Activated naive CD4-positive, alpha-beta T cell treated with anti-CD3 and anti-CD28 coated beads for 36 hours (primary cell): ENCODE measurements at regions of chr11 and their contacts with region 1.

Region 1: DNA sequence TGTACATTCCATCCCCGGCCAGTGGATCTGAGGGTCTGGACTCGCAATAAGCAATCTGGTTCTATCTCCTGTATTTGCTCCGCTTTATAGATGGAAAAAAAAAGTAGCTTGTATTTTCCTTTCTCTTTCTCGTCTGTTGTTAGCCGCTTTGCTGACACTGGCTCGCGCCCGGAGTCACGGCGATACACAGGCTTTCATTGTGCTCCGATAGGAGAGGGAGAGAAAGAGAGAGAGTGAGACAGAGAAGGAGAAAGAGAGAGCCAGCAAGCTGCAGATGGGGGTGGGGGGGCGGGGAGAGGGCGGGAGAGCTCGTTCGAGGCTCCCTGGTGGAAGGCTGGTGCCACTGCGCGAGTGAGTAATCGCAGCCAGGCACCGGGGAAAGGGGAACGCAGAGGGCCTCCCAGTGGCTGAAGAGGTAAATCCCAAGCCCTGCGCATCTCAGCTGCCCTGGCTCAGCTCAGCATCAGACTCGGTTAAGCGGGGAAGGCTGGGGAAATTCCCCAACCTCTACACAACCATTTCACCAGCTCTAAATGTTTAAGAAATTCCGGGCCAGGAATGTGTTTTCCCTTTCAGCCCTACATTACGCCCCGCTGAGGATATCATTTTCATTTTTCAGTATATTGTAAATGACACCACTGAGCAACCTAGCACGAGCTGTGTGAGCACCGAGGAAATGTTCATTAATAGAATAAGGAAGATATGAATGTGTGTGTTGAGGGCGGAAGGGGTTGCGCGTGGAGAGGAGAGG is at the start of gene MAML2:
- DNase-seq: peak; percentile 97
- H3K4me3 Mint-ChIP-seq: peak within 1 kb of the TSS; percentile 98
- H3K27ac Mint-ChIP-seq: peak within 1 kb of the TSS; percentile 94
- H3K4me1 Mint-ChIP-seq: peaks cover 22% of the 10 kb centered on the region
- H3K27me3 Mint-ChIP-seq: no peaks in the 10 kb centered on the region
- total RNA-seq, gene MAML2: 26.6 to 28.1 TPM

Region 2: DNA sequence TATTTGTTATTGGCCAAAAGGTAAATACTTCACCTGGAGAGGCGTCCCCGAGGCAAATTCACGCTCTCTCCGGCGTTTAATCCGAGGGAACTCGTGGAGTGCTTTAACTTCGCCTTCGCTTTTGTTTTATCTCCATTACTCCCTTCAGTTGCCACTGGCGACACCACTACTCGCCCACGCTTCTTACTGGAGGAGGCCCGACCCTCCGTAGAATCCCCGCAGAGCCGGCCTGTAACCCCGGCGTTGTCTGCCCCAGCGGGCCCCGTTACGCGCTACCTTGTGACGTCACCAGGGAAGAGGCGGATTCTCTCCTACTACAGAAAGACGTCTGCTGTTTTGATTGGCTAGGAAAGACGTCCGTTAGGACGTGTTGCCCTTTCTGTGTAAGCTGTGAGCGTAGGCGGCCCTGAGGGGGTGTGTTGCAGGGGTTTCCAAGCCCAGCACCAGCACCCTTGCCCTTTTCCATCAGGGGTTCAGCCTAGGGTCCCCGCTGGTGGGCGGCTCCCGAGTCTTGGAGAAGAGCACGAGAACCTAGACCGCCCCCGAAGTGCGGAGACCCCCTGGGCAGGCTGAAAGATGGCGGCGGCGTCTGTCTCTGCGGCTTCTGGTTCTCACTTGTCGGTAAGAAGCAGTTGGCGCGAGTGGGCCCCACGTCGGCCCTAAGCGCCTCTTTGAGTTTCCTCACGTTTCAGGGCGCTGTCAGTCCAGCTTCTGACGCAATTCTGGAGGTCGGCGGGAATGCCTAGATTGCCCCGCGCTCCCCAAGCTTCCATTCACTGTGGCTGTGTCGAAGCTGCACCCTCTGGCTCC is 552.8 kb before region 1 on chr11 and contains the start of gene CEP57:
- CTCF ChIA-PET with region 1: interaction called, 3 read pairs
- intact Hi-C with region 1: loop called (anchors 1 kb)
- DNase-seq: peak; percentile 98
- H3K4me3 Mint-ChIP-seq: peak within 1 kb of the TSS; percentile 99
- H3K27ac Mint-ChIP-seq: peak within 1 kb of the TSS; percentile 100
- H3K4me1 Mint-ChIP-seq: peaks cover 56% of the 10 kb centered on the region
- H3K27me3 Mint-ChIP-seq: no peaks in the 10 kb centered on the region
- total RNA-seq, gene CEP57: 110 to 115 TPM

Region 3: DNA sequence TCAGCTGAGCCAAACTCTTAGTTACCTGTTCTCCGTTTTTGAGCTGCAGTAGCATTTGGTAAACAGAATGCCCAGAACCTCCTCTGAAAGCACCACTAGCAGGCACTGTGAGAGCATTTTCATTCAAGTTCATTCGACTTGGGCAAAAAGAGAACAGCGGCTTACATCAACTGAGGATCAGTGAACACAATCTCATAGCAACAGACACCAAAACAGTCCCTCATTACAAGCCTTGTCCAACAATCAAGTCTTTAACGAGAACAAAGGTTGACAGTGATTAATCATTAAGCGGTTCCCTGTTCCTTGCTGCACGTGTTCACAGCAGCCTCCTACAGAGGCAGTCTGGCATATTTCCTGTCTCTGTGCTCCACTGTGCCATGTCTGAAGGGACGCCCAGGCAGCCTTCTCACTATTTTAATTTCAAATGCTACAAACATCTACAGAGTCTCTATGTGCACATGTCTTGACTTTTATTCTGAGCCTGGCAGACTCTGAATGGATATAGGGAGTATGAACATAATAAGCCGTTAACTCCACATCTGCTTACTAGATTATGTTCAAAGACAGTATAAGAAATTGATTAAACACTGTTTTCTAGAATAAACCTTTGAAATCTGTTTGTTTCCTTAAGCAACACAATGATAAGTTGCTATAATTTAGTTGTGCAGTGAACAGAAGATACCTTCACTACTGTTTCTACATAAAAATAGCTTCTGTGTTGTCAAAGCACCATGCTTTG is 330.9 kb before region 1 on chr11:
- CTCF ChIA-PET with region 1: interaction called, 15 read pairs
- intact Hi-C with region 1: loop called (anchors 1 kb)
- DNase-seq: peak; percentile 67
- H3K4me3 Mint-ChIP-seq: peak overlapping the region; percentile 52
- H3K27ac Mint-ChIP-seq: peak overlapping the region; percentile 72
- H3K4me1 Mint-ChIP-seq: peaks cover 69% of the 10 kb centered on the region
- H3K27me3 Mint-ChIP-seq: no peaks in the 10 kb centered on the region

Region 4: GRCh38 chr11:96149743-96150555 is 193.2 kb before region 1 on chr11:
- CTCF ChIA-PET with region 1: interaction called, 11 read pairs
- intact Hi-C with region 1: no loop called
- DNase-seq: no peak
- H3K4me3 Mint-ChIP-seq: no peak overlapping the region
- H3K27ac Mint-ChIP-seq: no peak overlapping the region
- H3K4me1 Mint-ChIP-seq: peaks cover 59% of the 10 kb centered on the region
- H3K27me3 Mint-ChIP-seq: no peaks in the 10 kb centered on the region

Region 5: DNA sequence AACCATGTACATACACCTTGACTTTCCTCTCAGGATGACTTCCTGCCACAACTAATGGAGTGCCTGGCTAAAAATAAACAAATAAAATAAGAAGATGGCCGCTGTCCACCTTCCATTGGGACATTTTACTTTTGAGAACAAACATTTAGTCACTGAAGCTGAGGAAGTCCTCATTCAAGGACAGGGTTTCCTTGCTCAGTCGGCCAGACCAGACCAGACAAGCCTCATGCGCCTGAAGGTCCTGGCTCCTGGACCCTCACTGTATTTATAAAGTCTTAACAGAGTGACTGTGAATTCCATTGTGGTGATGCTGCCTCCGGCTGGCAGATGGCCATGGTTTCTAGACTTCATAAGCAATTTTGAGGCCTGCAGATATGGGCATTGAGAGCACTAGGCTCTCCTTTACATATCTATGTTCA is 114.7 kb before region 1 on chr11:
- CTCF ChIA-PET with region 1: interaction called, 11 read pairs
- intact Hi-C with region 1: no loop called
- DNase-seq: no peak
- H3K4me3 Mint-ChIP-seq: no peak overlapping the region
- H3K27ac Mint-ChIP-seq: peak overlapping the region; percentile 81
- H3K4me1 Mint-ChIP-seq: peaks cover 78% of the 10 kb centered on the region
- H3K27me3 Mint-ChIP-seq: no peaks in the 10 kb centered on the region

Region 6: DNA sequence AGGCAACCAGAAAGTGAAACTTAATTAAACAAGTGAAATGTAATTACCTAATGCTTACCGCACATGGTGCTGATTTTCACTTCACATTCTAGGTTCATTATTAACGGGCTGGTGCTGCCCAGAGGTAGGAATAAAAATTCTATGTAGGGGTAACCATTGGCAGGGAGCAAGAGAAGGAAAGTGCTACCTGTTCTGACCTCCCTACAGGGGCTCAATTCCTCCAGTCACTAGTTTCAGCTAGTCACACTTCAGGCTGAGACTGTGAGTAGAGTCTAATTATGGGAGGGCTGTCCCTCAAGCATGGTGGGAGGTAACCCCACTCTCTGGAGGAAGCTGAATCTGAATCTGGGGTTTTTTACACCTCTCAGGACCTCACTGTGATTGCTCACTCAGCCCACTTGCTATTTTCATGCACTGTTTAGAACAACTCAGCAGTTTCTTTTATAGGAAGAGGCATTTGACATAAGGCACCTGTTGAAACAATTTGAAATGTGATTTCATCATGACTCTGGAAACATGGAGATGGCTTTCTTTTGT is 75.6 kb before region 1 on chr11:
- CTCF ChIA-PET with region 1: interaction called, 28 read pairs
- intact Hi-C with region 1: loop called (anchors 1 kb)
- DNase-seq: peak; percentile 78
- H3K4me3 Mint-ChIP-seq: peak overlapping the region; percentile 29
- H3K27ac Mint-ChIP-seq: peak overlapping the region; percentile 89
- H3K4me1 Mint-ChIP-seq: peaks cover 96% of the 10 kb centered on the region
- H3K27me3 Mint-ChIP-seq: no peaks in the 10 kb centered on the region

Region 7: GRCh38 chr11:96314326-96315020 is 28.7 kb before region 1 on chr11:
- CTCF ChIA-PET with region 1: interaction called, 14 read pairs
- intact Hi-C with region 1: no loop called
- DNase-seq: no peak
- H3K4me3 Mint-ChIP-seq: no peak overlapping the region
- H3K27ac Mint-ChIP-seq: peak overlapping the region; percentile 6
- H3K4me1 Mint-ChIP-seq: peaks cover 88% of the 10 kb centered on the region
- H3K27me3 Mint-ChIP-seq: no peaks in the 10 kb centered on the region